B cell (primary cell): ENCODE measurements at regions of chr5 and their contacts with region 1.

Region 1: GRCh38 chr5:69334793-69335268 is 2.2 kb upstream of the CCDC125 start:
- DNase-seq: peak; percentile 78
- ATAC-seq: peak; percentile 67
- H3K4me3 ChIP-seq: no peak overlapping the region
- H3K4me3 Mint-ChIP-seq: peak overlapping the region; percentile 30
- H3K27ac ChIP-seq: no peak overlapping the region
- H3K27ac Mint-ChIP-seq: peak overlapping the region; percentile 56
- H3K4me1 ChIP-seq: peaks cover 10 to 17% of the 10 kb centered on the region in 2 donors
- H3K4me1 Mint-ChIP-seq: peaks cover 15% of the 10 kb centered on the region
- H3K27me3 ChIP-seq: no peaks in the 10 kb centered on the region
- H3K27me3 Mint-ChIP-seq: no peaks in the 10 kb centered on the region
- CTCF ChIP-seq: peak; percentile 62

Region 2: GRCh38 chr5:69042915-69043658 is 291.7 kb before region 1 on chr5:
- CTCF ChIA-PET with region 1: interaction called, 17 read pairs
- POLR2A ChIA-PET with region 1: no interaction called
- intact Hi-C with region 1: loop called (anchors 1 kb)
- DNase-seq: peak; percentile 93
- ATAC-seq: peak; percentile 95
- H3K4me3 ChIP-seq: peak overlapping the region; percentile 43 to 81 (median 63)
- H3K4me3 Mint-ChIP-seq: peak overlapping the region; percentile 90
- H3K27ac ChIP-seq: peak overlapping the region; percentile 51 to 82
- H3K27ac Mint-ChIP-seq: peak overlapping the region; percentile 91
- H3K4me1 ChIP-seq: peaks cover 0 to 4% of the 10 kb centered on the region in 2 donors
- H3K4me1 Mint-ChIP-seq: peaks cover 6% of the 10 kb centered on the region
- H3K27me3 ChIP-seq: no peaks in the 10 kb centered on the region
- H3K27me3 Mint-ChIP-seq: no peaks in the 10 kb centered on the region
- CTCF ChIP-seq: peak; percentile 90

Region 3: GRCh38 chr5:69189162-69190086 is 145.4 kb before region 1 on chr5 and contains the start of gene CENPH:
- CTCF ChIA-PET with region 1: no interaction called
- POLR2A ChIA-PET with region 1: no interaction called
- intact Hi-C with region 1: loop called (anchors 1 kb)
- DNase-seq: peak; percentile 91
- ATAC-seq: peak; percentile 92
- H3K4me3 ChIP-seq: peak within 1 kb of the TSS; percentile 64 to 96 (median 80)
- H3K4me3 Mint-ChIP-seq: peak within 1 kb of the TSS; percentile 95
- H3K27ac ChIP-seq: peak within 1 kb of the TSS; percentile 30 to 88
- H3K27ac Mint-ChIP-seq: peak within 1 kb of the TSS; percentile 93
- H3K4me1 ChIP-seq: peaks cover 9 to 14% of the 10 kb centered on the region in 2 donors
- H3K4me1 Mint-ChIP-seq: peaks cover 17% of the 10 kb centered on the region
- H3K27me3 ChIP-seq: no peaks in the 10 kb centered on the region
- H3K27me3 Mint-ChIP-seq: no peaks in the 10 kb centered on the region
- CTCF ChIP-seq: no peak
- total RNA-seq, gene CENPH: 11.9 and 12.0 TPM in 2 replicates

Region 4: GRCh38 chr5:69317391-69317790 is 17.4 kb before region 1 on chr5:
- CTCF ChIA-PET with region 1: no interaction called
- POLR2A ChIA-PET with region 1: no interaction called
- intact Hi-C with region 1: no loop called
- DNase-seq: no peak
- ATAC-seq: no peak
- H3K4me3 ChIP-seq: peak overlapping the region in 1 of 5 experiments; percentile 34
- H3K4me3 Mint-ChIP-seq: no peak overlapping the region
- H3K27ac ChIP-seq: no peak overlapping the region
- H3K27ac Mint-ChIP-seq: no peak overlapping the region
- H3K4me1 ChIP-seq: no peaks in the 10 kb centered on the region
- H3K4me1 Mint-ChIP-seq: peaks cover 2% of the 10 kb centered on the region
- H3K27me3 ChIP-seq: no peaks in the 10 kb centered on the region
- H3K27me3 Mint-ChIP-seq: no peaks in the 10 kb centered on the region
- CTCF ChIP-seq: no peak

Region 5: DNA sequence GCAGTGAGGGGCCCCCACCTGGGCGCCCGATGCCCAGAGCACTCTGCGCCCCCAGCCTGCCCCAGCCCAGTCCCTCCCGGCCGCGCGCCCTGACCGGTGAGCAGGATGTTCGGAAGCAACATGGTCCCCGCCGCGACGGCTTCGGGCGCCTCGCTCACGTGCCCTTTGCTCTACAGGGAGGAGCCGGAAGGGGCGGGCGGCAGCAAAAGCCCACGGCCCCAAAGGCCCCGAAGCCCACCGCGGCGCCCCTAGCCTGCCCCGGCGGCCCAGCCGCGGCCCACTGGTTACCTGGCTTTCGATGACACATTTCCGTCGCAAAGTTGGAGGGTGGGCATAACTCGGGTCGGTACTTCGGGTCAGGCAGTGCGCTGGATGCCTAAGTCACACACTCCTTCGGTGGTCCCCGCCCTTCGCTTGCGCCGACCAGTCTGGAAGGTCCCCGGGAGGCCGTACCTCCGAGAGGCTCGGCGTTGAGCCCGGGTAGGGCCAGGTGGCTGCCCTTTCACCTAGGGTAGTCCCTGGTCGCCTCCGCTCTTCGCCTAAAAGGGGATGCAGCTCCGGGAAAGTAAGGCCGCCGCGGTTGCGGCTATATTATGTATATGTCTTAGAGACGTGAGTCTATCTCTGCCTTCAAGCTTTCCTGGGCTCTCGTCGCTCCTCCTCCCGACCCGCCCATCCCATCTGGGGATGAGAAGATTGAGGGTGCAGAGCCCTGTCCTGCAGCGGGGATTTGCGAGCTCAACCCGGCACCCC is 34.7 kb after region 1 on chr5 and contains the starts of genes AK6, RAD17 and TAF9:
- CTCF ChIA-PET with region 1: interaction called, 3 read pairs
- POLR2A ChIA-PET with region 1: no interaction called
- intact Hi-C with region 1: loop called (anchors 1 kb)
- DNase-seq: peak; percentile 99
- ATAC-seq: peak; percentile 95
- H3K4me3 ChIP-seq: peak within 1 kb of the TSS; percentile 69 to 89 (median 83)
- H3K4me3 Mint-ChIP-seq: peak within 1 kb of the TSS; percentile 96
- H3K27ac ChIP-seq: peak within 1 kb of the TSS; percentile 96 to 99
- H3K27ac Mint-ChIP-seq: peak within 1 kb of the TSS; percentile 100
- H3K4me1 ChIP-seq: peaks cover 22 to 26% of the 10 kb centered on the region in 2 donors
- H3K4me1 Mint-ChIP-seq: peaks cover 41% of the 10 kb centered on the region
- H3K27me3 ChIP-seq: no peaks in the 10 kb centered on the region
- H3K27me3 Mint-ChIP-seq: no peaks in the 10 kb centered on the region
- CTCF ChIP-seq: no peak
- total RNA-seq, gene AK6: 21.7 and 25.4 TPM in 2 replicates
- total RNA-seq, gene RAD17: 39.6 and 41.0 TPM in 2 replicates
- total RNA-seq, gene TAF9: 41.6 and 42.0 TPM in 2 replicates

Region 6: DNA sequence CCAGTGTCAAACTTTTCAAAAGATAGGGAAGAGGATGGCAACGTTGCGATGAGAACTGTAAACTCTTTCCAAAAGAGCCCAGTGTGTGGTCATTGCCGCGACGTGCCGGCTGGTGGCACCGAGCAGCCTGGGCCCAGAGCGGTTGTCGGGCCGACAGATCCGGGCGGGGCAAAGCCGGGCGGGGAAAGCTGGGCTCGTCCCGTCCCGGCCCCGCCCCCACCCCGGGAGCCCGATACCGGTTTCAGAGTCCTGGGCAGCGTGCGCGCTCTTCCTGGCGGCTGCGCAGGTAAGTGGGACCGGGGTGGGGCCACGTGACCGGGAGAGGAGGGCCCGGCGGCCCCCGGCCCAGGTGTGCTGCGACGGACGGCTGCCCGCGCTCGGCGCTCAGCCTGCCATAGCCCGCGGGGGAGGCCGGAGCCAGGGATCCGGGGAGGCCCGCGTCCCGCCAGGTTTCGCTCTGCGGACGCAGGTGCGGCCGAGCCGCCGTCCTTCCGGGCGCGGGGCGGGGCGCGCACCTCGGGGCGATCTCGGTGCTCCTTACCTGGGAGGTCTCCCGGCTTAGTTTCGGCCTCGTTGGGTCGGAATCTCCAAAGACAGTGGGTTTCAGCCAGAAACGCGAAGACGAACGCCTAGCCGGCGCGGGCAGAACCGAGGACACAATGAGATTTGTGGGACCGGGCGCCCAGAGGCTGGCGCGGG is 80.2 kb after region 1 on chr5 and contains the start of gene MARVELD2:
- CTCF ChIA-PET with region 1: no interaction called
- POLR2A ChIA-PET with region 1: no interaction called
- intact Hi-C with region 1: no loop called
- DNase-seq: peak; percentile 62
- ATAC-seq: peak; percentile 92
- H3K4me3 ChIP-seq: peak within 1 kb of the TSS in 4 of 5 experiments; percentile 34 to 74 (median 60)
- H3K4me3 Mint-ChIP-seq: peak within 1 kb of the TSS; percentile 78
- H3K27ac ChIP-seq: peak within 1 kb of the TSS in 1 of 2 donors; percentile 45
- H3K27ac Mint-ChIP-seq: no peak within 1 kb of the TSS
- H3K4me1 ChIP-seq: peaks cover 5 to 9% of the 10 kb centered on the region in 2 donors
- H3K4me1 Mint-ChIP-seq: peaks cover 10% of the 10 kb centered on the region
- H3K27me3 ChIP-seq: no peaks in the 10 kb centered on the region
- H3K27me3 Mint-ChIP-seq: no peaks in the 10 kb centered on the region
- CTCF ChIP-seq: no peak
- total RNA-seq, gene MARVELD2: 0.94 and 1.7 TPM in 2 replicates